ENCODE measurements at regions of chr3 and their contacts with region 1.

Region 1: GRCh38 chr3:42880601-42881451 is 5.1 kb upstream of the CYP8B1 start:
- DNase-seq: peak; percentile 90
- ATAC-seq: peak; percentile 98

Region 2: DNA sequence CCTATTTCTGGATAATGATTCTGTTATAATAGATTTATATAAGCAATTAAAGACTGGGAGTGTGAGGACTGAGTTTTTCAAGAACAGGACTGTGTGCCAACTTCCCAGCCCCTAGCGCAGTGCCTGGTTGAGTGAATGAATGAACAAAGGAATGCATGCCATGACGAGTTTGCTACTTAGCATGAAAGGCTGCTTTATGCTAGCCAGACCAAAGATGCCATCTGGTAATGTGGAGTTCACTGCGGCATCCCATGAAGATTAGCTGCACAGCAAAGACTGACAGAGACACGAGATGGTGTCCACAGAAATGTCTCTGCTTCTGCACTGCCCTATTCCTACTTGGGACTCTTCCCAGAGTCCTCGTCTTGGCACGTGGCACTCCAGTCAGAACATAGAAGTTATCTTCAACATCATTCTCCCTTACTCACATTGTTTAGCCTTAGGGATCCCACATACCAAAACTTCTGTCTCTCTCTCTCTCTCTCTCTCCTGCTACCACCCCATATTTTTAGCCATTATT is 1965.4 kb before region 1 on chr3:
- intact Hi-C with region 1: loop called (anchors 5 kb)
- DNase-seq: no peak
- ATAC-seq: no peak

Region 3: GRCh38 chr3:42780892-42781700 is 99.7 kb before region 1 on chr3:
- intact Hi-C with region 1: loop called (anchors 5 kb)
- DNase-seq: no peak
- ATAC-seq: peak; percentile 68

Region 4: GRCh38 chr3:42839616-42840015 is 41.2 kb before region 1 on chr3:
- intact Hi-C with region 1: loop called (anchors 10 kb)
- DNase-seq: no peak
- ATAC-seq: peak; percentile 83

Measured in sciatic nerve (tissue), 2 donors.